H1 (cell line): ENCODE measurements at regions of chr2 and their contacts with region 1.

Region 1: DNA sequence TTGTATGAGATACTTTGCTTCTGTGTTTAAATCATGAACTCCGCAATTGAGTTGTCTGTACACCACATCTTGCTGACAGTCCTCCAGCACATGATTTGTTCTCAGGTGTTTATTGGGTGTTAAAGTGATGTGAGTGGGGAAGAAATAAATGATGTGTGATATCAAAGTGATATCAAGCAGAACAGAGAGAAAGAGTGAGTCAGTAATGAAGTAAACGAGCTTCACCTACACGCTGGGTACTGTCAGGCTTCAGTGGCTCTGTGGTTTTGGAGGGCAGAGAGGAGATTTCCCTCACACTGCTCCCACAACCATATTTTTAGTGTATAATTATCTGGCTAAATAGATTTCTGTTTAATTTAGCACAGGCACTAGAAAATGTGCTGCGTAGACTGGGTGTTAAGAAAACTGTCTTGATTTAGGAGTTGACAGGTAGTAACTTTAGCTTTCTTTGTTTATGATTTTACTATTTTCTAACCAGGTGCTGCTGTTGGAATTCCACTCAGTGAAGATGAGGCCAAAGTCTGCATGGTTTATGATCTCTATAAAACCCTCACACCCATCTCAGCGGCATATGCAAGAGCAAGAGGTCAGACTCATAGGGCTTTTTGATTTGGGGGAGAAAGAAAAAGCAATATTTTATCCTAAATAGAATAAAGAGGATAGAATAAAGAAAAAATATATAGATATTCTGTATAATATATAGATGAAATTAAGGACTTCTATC is 21.2 kb downstream of the ATIC start:
- DNase-seq: no peak
- H3K4me3 ChIP-seq: no peak overlapping the region
- H3K27ac ChIP-seq: no peak overlapping the region
- H3K4me1 ChIP-seq: no peaks in the 10 kb centered on the region
- H3K27me3 ChIP-seq: no peaks in the 10 kb centered on the region
- CTCF ChIP-seq: no peak
- EP300 ChIP-seq: no peak
- POLR2A ChIP-seq: no peak
- RAD21 ChIP-seq: no peak

Region 2: GRCh38 chr2:215354771-215355695 is 22.0 kb after region 1 on chr2:
- CTCF ChIA-PET with region 1: no interaction called
- POLR2A ChIA-PET with region 1: interaction called, 11 read pairs
- DNase-seq: no peak
- H3K4me3 ChIP-seq: no peak overlapping the region
- H3K27ac ChIP-seq: no peak overlapping the region
- H3K4me1 ChIP-seq: no peaks in the 10 kb centered on the region
- H3K27me3 ChIP-seq: no peaks in the 10 kb centered on the region
- CTCF ChIP-seq: no peak
- EP300 ChIP-seq: no peak
- POLR2A ChIP-seq: no peak
- RAD21 ChIP-seq: no peak

Region 3: DNA sequence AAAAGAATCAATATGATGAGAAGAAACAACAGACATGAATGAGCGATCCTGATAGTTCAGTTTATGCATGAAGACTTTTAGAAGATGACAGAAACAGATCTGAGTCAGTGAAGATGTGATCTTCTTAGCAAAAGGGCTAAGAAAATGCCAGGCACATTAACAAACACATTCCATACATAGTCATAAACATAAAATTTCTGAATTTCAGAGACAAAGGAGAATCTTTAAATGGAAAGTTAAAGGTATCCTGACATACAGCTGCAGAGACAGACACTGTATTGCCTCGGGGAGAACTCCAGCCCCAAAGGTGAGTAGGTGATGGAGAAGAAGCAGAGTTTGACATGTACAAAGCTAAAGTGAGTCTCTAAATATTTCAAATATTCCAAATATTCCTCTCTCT is 143.4 kb after region 1 on chr2:
- CTCF ChIA-PET with region 1: no interaction called
- POLR2A ChIA-PET with region 1: no interaction called
- DNase-seq: no peak
- H3K4me3 ChIP-seq: no peak overlapping the region
- H3K27ac ChIP-seq: no peak overlapping the region
- H3K4me1 ChIP-seq: no peaks in the 10 kb centered on the region
- H3K27me3 ChIP-seq: no peaks in the 10 kb centered on the region
- CTCF ChIP-seq: no peak
- EP300 ChIP-seq: no peak
- POLR2A ChIP-seq: no peak
- RAD21 ChIP-seq: no peak